H1 (cell line): ENCODE measurements at regions of chr19 and their contacts with region 1.

Region 1: DNA sequence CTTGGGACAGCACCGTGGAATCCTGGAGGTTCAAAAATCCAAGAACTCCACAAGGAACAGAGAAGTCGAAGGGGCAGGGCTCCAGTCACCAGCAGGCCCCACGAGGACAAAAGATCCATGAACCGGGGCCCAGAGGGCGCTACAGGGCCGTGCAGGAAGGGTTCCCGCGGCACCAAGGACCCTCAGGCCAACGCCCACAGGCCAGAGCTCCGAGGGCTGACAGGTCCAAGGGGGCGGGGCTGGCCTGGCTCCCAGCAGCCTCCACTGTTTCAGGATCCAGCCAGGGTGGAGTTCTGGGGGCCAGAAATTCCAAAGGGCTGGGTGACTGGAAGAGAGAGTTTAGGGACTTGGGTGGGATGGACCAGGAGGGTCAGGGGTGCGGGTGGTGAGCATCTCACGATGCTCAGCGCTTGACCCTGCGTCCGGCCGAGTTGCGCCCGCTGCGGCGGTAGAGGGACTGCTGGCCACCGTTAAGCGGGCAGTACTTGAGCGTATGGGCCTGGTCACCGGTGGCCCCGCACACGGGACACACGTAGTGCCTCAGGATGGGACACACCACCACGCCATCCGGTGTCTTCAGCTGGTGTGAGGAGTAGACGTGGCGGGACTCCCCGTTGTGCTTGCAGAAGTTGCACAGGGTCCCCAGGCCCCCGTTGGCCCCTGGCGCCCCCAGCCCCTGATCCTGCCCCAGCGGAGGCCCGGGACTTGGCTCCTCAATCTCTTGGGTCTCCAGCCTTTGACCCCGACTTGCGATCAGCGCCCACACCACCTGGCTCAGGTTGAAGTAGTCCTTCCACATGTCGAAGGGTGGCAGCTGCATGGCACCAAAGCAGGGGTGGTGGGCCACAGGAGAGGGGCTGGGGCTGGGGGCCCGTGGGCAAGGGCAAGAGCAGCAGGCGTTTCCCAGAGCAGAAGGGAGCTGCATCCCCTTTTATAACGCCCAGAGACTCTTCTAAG is at the start of gene NANOS2:
- DNase-seq: peak; percentile 54 to 91
- H3K4me3 ChIP-seq: no peak within 1 kb of the TSS
- H3K27ac ChIP-seq: no peak within 1 kb of the TSS
- H3K4me1 ChIP-seq: peaks cover 0 to 3% (median 0%) of the 10 kb centered on the region in 4 experiments; a peak in 3 of 7 replicates
- H3K27me3 ChIP-seq: no peaks in the 10 kb centered on the region
- CTCF ChIP-seq: peak; percentile 70 to 89 (median 88)
- EP300 ChIP-seq: no peak
- POLR2A ChIP-seq: no peak
- RAD21 ChIP-seq: peak; percentile 89 to 93
- total RNA-seq, gene NANOS2: not detected in 2 replicates

Region 2: DNA sequence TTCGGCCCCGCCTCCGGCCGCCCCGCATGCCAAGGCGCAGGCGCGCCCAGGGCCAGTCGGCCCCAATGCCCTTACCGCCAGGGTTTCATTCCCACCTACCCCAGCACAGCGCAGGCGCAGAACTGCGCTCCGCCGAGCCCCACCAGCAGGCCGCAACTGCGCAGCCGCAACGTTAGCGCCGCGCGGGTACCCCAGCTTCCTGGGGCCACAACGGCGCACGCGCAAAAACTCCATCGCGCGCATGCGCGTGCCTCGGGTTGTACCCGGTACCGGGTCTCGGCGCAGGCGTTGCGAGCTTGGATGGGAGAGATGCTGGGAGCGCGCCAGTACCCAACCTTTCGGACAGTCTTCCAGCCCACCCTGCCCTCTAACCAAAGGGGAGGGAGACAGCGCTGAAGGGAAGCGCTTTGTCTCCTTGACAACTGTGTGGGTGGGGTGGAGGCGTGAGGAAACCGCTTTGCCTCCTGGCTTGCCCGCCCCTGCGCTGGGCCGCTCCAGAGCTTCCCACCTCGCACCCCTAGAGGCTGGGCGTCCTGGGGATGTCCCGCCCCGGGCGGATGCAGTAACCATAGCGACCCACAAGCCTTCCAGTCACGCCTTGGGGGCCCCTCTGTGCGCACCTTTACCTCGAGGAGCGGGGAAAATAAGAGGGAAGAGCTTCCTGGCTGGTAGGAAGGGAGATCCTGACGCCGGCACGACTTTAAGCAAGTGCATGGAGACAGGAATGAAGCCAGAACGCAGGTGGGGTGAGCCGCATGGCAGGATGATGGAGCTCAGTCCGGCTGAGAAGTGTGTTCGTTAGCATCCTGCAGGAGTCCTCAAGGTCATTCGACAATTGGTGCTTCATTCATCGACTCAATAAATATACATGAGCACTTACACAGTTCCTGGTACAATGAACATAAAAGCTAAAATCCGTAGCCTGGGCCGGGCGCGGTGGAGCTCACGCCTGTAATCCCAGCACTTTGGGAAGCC is 11.2 kb before region 1 on chr19:
- CTCF ChIA-PET with region 1: interaction called, 19 read pairs
- POLR2A ChIA-PET with region 1: interaction called, 4 read pairs
- DNase-seq: peak; percentile 95 to 100
- H3K4me3 ChIP-seq: peak overlapping the region; percentile 48 to 76 (median 72)
- H3K27ac ChIP-seq: peak overlapping the region; percentile 43; the same call in 1 of the 2 replicates
- H3K4me1 ChIP-seq: peaks cover 0 to 2% (median under 1%) of the 10 kb centered on the region in 4 experiments; a peak in 3 of 7 replicates
- H3K27me3 ChIP-seq: peaks cover 0 to 16% (median 11%) of the 10 kb centered on the region in 4 experiments; a peak in 6 of 7 replicates
- CTCF ChIP-seq: no peak
- EP300 ChIP-seq: no peak
- POLR2A ChIP-seq: no peak; a peak in 1 of 3 replicates
- RAD21 ChIP-seq: no peak

Region 3: DNA sequence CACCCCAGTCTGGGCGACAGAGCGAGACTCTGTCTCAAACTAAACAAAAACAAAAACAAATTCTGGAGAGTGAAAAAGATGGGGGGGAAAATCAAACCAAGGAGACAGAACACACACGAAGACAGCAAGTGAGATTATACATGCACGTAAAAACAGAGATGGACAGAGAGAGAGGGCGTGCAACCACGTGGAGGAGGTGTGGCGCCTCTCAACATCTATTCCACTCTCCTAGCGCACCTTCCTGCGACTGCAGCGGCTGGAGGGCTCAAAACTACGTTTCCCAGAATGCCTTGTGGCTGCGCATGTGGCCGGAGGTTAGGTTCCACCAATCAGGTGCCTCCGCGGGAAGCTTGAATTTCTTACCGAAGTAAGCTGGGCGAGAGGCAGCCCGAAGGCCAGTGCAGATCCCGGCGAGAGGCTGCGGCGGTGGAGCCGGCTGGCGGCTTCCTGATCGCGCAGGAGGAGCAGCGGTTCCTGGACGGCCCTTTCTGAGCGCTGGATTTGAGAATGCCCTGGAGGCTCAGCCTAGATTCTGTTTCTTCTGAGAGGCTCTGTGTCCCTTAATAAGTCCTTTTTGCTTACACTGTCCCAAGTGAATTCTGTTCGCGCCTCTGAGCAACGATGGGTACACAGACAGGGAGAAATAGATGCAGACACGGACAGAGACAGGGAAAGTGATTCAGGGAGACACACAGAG is 13.6 kb after region 1 on chr19:
- CTCF ChIA-PET with region 1: interaction called, 15 read pairs
- POLR2A ChIA-PET with region 1: interaction called, 3 read pairs
- DNase-seq: peak; percentile 90 to 92
- H3K4me3 ChIP-seq: peak overlapping the region; percentile 15 to 60 (median 42); a peak in 7 of 8 replicates
- H3K27ac ChIP-seq: no peak overlapping the region
- H3K4me1 ChIP-seq: no peaks in the 10 kb centered on the region
- H3K27me3 ChIP-seq: peaks cover 1 to 18% (median 8%) of the 10 kb centered on the region in 4 experiments; a peak in 5 of 7 replicates
- CTCF ChIP-seq: peak; percentile 6 to 33 (median 33); a peak in 2 of 4 replicates
- EP300 ChIP-seq: no peak
- POLR2A ChIP-seq: peak; percentile 56 to 92
- RAD21 ChIP-seq: peak; percentile 37 to 48; a peak in 3 of 4 replicates

Region 4: DNA sequence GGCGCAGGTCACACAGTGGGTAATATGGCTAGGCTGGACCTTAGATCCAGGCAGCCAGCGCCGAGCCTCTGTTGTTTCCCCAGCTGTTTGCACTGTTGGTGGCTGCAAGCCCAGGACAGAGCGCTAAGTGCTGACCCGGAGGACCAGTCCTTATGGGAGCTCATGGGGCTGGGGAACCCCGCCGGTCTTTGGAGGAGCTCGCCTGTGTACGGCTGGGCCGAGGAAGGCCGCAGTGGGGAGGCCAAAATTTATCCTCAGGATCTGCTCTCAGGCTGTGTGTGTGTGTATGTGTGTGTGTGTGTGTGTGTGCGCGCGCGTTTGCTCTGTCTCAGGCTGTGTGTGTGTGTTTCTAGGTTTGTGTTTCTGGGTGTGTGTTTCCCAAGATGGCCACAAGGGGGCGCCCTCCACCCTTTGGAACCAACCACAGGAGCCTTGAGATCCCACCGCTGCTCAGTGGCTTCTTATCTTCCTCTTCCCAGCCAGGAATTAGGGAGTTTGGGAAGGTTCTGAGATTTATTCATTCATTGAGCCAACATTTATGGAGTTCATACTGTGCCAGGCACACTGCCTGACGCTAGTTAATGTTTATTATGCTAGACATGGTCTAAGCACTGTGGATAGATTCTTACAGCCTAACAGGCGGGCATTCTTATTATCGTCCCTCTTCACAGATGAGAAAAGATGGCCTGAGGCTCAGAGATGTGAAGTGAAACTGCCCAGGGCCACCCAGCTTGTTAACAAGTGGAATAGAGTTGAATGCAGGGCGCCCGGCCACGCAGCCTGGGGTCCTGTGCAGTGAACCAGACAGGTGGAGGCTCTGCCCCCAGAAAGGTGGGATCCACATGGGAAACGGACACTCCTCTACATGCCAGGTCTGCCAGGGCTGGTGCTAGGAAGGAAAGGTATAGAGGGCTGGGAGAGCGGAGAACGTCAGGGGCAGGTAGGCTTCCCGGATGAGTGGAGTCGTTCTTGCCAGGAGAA is 95.7 kb after region 1 on chr19:
- CTCF ChIA-PET with region 1: interaction called, 25 read pairs
- POLR2A ChIA-PET with region 1: no interaction called
- DNase-seq: peak in 1 of 2 experiments; percentile 95
- H3K4me3 ChIP-seq: no peak overlapping the region
- H3K27ac ChIP-seq: no peak overlapping the region
- H3K4me1 ChIP-seq: peaks cover 0 to 6% (median 5%) of the 10 kb centered on the region in 4 experiments; a peak in 5 of 7 replicates
- H3K27me3 ChIP-seq: peaks cover 0 to 7% (median 6%) of the 10 kb centered on the region in 4 experiments; a peak in 4 of 7 replicates
- CTCF ChIP-seq: peak; percentile 75 to 84 (median 82)
- EP300 ChIP-seq: no peak
- POLR2A ChIP-seq: no peak
- RAD21 ChIP-seq: peak; percentile 61 to 72